Mammary epithelial cell (primary cell): ENCODE measurements at regions of chr2 and their contacts with region 1.

Region 1: DNA sequence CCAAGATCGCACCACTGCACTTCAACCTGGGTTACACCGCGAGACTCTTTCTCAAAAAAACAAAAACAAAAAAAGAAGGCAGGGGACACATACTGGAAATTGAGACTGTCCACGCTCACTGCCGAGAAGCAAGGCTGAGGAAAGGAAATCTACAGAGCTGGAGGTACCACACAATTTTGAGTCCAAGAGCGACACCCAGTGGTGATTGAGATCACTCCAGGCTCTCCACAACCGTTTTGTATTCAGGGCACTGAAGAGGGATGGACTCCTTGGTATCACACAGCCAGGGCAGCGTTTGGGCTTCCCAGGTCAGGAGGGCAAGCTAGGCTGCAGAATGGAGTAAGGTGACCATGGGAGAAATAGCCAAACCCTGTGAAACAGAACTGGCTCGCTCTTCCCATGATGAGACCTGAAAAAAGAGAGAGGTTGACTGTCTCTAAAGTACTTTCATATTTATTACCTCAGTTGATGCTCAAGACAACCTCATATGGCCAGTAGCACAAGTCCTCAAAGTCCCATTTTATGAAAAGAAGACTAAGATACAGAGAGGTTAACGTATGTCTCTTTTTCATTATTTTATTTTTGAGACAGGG is 74.5 kb upstream of the YPEL5 start:
- DNase-seq: peak; percentile 55
- H3K4me3 ChIP-seq: no peak overlapping the region
- H3K27ac ChIP-seq: no peak overlapping the region
- H3K4me1 ChIP-seq: no peaks in the 10 kb centered on the region
- H3K27me3 ChIP-seq: no peaks in the 10 kb centered on the region
- CTCF ChIP-seq: peak; percentile 82 to 92

Region 2: GRCh38 chr2:29238497-29238896 is 833.8 kb before region 1 on chr2:
- CTCF ChIA-PET with region 1: no interaction called
- dilution Hi-C with region 1: no loop called
- in situ Hi-C with region 1: no loop called
- intact Hi-C with region 1: loop called (anchors 5 kb)
- DNase-seq: peak; percentile 40
- H3K4me3 ChIP-seq: no peak overlapping the region
- H3K27ac ChIP-seq: no peak overlapping the region
- H3K4me1 ChIP-seq: no peaks in the 10 kb centered on the region
- H3K27me3 ChIP-seq: no peaks in the 10 kb centered on the region
- CTCF ChIP-seq: peak; percentile 92 to 93

Region 3: GRCh38 chr2:29644949-29645348 is 427.4 kb before region 1 on chr2:
- CTCF ChIA-PET with region 1: no interaction called
- dilution Hi-C with region 1: no loop called
- in situ Hi-C with region 1: no loop called
- intact Hi-C with region 1: loop called (anchors 2 kb)
- DNase-seq: no peak
- H3K4me3 ChIP-seq: no peak overlapping the region
- H3K27ac ChIP-seq: no peak overlapping the region
- H3K4me1 ChIP-seq: peaks cover 14% of the 10 kb centered on the region
- H3K27me3 ChIP-seq: no peaks in the 10 kb centered on the region
- CTCF ChIP-seq: peak in 1 of 2 donors; percentile 23

Region 4: DNA sequence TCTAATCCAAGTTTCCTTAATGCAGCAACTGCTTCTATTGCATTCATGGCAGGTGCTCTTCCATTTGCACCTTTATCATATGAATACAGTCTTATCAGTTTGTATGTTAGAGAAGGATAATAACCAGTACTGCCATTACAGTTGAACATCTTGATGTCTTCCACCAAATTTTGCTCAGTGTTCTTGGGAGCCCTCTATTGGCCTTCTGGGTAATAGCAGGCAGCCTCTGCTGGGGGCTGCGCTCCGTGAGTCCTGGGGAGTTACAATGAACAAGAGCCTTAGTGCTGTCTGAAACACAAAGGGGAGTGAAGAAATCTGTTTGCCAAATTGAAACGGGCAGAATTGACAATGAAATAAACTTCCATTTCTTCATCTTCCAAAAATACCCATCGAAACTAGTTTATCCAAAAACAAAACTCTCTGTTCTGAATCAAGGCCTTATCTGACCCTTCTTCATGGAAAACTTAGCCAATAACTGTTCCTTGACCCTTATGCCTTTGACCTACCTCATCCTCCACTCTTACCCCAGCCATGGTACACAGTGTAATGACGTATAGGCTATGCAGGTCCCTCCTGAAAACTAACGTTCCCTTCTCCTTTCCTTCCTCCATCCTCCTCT is 230.9 kb before region 1 on chr2:
- CTCF ChIA-PET with region 1: no interaction called
- dilution Hi-C with region 1: no loop called
- in situ Hi-C with region 1: no loop called
- intact Hi-C with region 1: loop called (anchors 10 kb)
- DNase-seq: no peak
- H3K4me3 ChIP-seq: no peak overlapping the region
- H3K27ac ChIP-seq: no peak overlapping the region
- H3K4me1 ChIP-seq: no peaks in the 10 kb centered on the region
- H3K27me3 ChIP-seq: peaks cover 6% of the 10 kb centered on the region
- CTCF ChIP-seq: peak; percentile 96 to 98

Region 5: DNA sequence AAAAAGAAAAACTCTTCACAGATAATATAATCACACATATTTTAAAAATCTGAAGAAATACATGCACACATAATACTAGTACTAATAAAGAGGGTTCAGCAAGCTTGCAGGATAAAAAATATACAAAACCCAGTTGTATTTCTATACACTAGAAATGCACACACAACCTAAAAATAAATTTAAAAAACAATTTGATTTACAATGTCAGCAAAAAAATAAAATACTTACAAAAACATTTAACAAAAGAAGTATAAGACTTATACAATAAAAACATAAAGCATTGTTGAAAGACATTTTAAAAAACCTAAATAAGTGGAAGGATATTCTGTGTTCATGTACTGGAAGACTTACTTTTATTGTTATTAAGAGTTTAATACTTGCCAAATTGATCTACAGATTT is 69.2 kb before region 1 on chr2:
- CTCF ChIA-PET with region 1: no interaction called
- dilution Hi-C with region 1: no loop called
- in situ Hi-C with region 1: no loop called
- intact Hi-C with region 1: no loop called
- DNase-seq: no peak
- H3K4me3 ChIP-seq: no peak overlapping the region
- H3K27ac ChIP-seq: no peak overlapping the region
- H3K4me1 ChIP-seq: no peaks in the 10 kb centered on the region
- H3K27me3 ChIP-seq: no peaks in the 10 kb centered on the region
- CTCF ChIP-seq: no peak

Region 6: DNA sequence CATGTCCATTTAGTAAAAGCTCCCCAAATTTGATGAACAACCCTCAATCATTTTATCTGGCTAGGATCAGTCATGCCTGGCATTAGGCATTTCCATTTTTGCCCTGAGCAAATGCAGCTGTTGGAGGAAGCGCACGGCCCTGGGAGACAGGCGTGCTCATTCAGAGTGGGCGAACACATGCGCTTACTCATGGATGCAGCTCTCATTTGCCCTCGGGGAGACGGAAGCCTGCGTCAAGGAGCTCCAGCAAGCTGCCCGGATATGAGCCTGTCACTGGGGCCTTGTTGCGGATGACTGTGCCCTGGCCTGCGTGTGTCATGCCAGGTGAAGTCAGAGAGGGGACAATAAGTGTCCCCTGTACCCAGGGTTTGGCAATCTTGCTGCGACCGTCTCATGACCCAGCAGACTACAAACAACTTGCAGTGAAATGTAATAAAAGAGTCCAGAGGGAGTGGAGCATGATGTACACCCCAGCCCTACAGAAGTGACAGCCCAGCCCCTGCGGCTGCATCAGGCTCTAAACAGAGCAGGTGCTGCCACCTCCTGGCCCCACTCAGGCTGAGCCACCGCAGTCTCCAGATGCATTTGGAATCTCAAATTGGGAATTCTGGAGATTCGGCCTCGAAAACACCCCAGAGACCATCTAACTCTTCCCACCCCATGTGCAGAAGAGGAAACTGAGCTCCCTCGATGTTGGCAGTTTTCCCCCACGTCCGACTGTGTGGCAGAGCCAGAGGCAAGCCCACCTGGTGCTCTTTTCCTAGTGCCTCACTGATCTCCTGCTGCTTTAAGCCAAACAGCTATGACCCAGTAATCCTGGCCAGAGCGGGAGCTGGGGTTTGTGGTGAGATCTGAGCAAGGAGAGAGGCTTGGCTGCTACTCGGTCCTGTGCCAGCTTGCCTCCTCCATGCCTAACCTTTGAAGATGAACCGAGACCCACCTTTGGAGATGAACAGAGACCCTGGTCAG is 46.0 kb before region 1 on chr2:
- CTCF ChIA-PET with region 1: no interaction called
- dilution Hi-C with region 1: no loop called
- in situ Hi-C with region 1: no loop called
- intact Hi-C with region 1: loop called (anchors 2 kb)
- DNase-seq: peak; percentile 95
- H3K4me3 ChIP-seq: no peak overlapping the region
- H3K27ac ChIP-seq: no peak overlapping the region
- H3K4me1 ChIP-seq: peaks cover 13% of the 10 kb centered on the region
- H3K27me3 ChIP-seq: no peaks in the 10 kb centered on the region
- CTCF ChIP-seq: peak; percentile 63 to 81